ENCODE measurements at regions of chr7 and their contacts with region 1.

Region 1: GRCh38 chr7:25857376-25857921 is 294.5 kb upstream of the NFE2L3 start:
- DNase-seq: peak in 1 of 2 donors; percentile 73
- H3K4me3 ChIP-seq: peak overlapping the region; percentile 56 to 62
- H3K27ac ChIP-seq: peak overlapping the region; percentile 85
- H3K4me1 ChIP-seq: peaks cover 2 to 32% (median 10%) of the 10 kb centered on the region in 4 donors
- H3K27me3 ChIP-seq: peaks cover 4 to 20% of the 10 kb centered on the region in 2 donors
- CTCF ChIP-seq: no peak

Region 2: DNA sequence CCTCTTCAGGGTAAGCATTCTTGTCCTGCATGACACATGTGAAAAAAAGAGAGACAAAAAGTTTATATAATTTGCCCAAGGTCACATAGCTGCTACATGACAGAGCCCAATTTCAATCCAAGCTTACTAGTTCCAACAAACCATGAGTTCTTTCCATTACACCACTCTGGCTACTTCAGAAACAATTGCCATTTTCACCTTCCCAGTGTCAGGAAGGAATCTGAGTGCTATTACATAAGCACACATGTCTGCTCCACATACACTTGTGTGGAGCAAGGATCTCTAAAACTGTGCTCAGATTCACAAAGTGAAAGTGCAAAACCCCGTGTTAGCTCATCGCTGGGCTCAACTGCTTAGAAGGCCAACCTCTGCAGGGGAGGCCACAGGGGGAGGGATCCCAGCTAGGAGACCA is 61.6 kb before region 1 on chr7:
- intact Hi-C with region 1: no loop called
- DNase-seq: no peak
- H3K4me3 ChIP-seq: peak overlapping the region in 1 of 2 donors; percentile 1
- H3K27ac ChIP-seq: peak overlapping the region; percentile 67 to 74
- H3K4me1 ChIP-seq: peaks cover 0 to 51% (median 13%) of the 10 kb centered on the region in 4 donors
- H3K27me3 ChIP-seq: no peaks in the 10 kb centered on the region
- CTCF ChIP-seq: no peak

Region 3: GRCh38 chr7:25820432-25821040 is 36.9 kb before region 1 on chr7:
- intact Hi-C with region 1: no loop called
- DNase-seq: no peak
- H3K4me3 ChIP-seq: no peak overlapping the region
- H3K27ac ChIP-seq: no peak overlapping the region
- H3K4me1 ChIP-seq: peaks cover 0 to 8% (median 0%) of the 10 kb centered on the region in 4 donors
- H3K27me3 ChIP-seq: no peaks in the 10 kb centered on the region
- CTCF ChIP-seq: no peak

Region 4: DNA sequence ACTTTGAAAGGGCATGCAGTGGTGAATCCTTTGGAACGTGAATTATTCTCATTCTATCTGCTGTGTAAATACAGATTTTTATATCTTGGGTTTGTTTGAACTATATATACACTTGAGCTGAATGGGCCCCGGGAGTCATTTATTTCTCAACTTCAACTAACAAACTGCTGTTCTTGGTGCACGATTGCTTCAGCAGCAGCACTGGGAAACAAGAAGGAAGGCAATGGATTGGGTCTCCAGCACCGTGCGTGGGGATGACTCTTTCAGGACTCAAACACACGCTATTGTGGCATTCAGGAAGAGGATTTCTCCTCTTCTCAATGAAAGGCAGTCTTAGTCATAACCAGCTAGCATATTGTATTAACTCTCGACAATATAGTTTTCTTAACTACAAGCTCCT is 68.6 kb after region 1 on chr7:
- intact Hi-C with region 1: no loop called
- DNase-seq: no peak
- H3K4me3 ChIP-seq: no peak overlapping the region
- H3K27ac ChIP-seq: no peak overlapping the region
- H3K4me1 ChIP-seq: no peaks in the 10 kb centered on the region
- H3K27me3 ChIP-seq: peaks cover 0 to 7% of the 10 kb centered on the region in 2 donors
- CTCF ChIP-seq: no peak

Region 5: GRCh38 chr7:25940086-25940906 is 82.8 kb after region 1 on chr7:
- intact Hi-C with region 1: no loop called
- DNase-seq: no peak
- H3K4me3 ChIP-seq: no peak overlapping the region
- H3K27ac ChIP-seq: no peak overlapping the region
- H3K4me1 ChIP-seq: no peaks in the 10 kb centered on the region
- H3K27me3 ChIP-seq: peaks cover 0 to 7% of the 10 kb centered on the region in 2 donors
- CTCF ChIP-seq: no peak

Region 6: GRCh38 chr7:27172823-27173510 is 1315.5 kb after region 1 on chr7:
- intact Hi-C with region 1: loop called (anchors 2 kb)
- DNase-seq: peak; percentile 85 to 95
- H3K4me3 ChIP-seq: peak overlapping the region; percentile 68 to 91
- H3K27ac ChIP-seq: peak overlapping the region; percentile 96 to 97
- H3K4me1 ChIP-seq: peaks cover 0 to 37% (median 10%) of the 10 kb centered on the region in 4 donors
- H3K27me3 ChIP-seq: no peaks in the 10 kb centered on the region
- CTCF ChIP-seq: no peak